ENCODE measurements at regions of chr19 and their contacts with region 1.

Region 1: GRCh38 chr19:16382775-16383543 is 58.3 kb downstream of the KLF2 start:
- DNase-seq: peak; percentile 88 to 97 (median 95)
- ATAC-seq: peak; percentile 88
- H3K4me3 ChIP-seq: no peak overlapping the region
- H3K27ac ChIP-seq: peak overlapping the region; percentile 97
- H3K4me1 ChIP-seq: peaks cover 13% of the 10 kb centered on the region
- H3K27me3 ChIP-seq: no peaks in the 10 kb centered on the region

Region 2: GRCh38 chr19:16247353-16248182 is 135.4 kb before region 1 on chr19:
- intact Hi-C with region 1: loop called (anchors 1 to 5 kb)
- DNase-seq: peak; percentile 87 to 95 (median 95)
- ATAC-seq: peak; percentile 92 to 95
- H3K4me3 ChIP-seq: no peak overlapping the region
- H3K27ac ChIP-seq: no peak overlapping the region
- H3K4me1 ChIP-seq: no peaks in the 10 kb centered on the region
- H3K27me3 ChIP-seq: no peaks in the 10 kb centered on the region

Region 3: DNA sequence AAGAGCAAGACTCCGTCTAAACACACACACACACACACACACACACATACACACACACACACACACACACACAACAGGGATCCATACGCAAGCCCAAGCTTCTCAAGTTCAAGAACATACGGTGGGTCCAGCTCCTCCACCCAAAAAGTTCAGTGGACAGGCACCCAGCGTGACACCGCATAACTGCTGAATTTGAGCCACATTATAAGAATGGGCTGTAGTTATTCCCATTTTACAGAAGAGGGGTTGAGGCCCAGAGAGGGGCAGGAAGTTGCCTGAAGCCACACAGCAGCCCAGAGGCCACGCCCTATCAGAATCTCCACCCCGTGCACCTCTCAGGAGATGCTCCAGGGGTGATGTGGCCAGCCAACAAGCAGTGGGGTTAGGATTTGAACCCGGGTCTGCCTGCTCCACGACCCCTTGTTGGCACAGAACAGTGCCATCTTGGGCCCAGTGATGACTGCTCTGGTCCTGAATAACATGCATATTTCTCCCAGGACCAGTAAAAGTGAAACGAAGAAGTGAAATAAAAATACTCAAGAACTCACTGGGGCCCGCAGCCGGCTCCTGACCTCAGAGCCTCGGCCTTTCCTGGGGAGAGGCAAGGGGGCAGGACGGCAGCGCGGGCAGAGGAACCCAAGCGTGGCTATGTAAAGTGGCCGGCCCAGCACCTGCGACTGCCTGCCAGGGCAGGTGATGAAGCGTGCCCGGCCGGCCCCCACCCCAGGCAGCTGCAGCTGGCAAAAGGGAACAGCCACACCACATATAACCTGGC is 123.4 kb before region 1 on chr19:
- intact Hi-C with region 1: loop called in 1 of 4 experiments (anchors 5 kb)
- DNase-seq: peak in 2 of 3 donors; percentile 70 to 74
- ATAC-seq: no peak
- H3K4me3 ChIP-seq: no peak overlapping the region
- H3K27ac ChIP-seq: peak overlapping the region; percentile 99
- H3K4me1 ChIP-seq: peaks cover 15% of the 10 kb centered on the region
- H3K27me3 ChIP-seq: no peaks in the 10 kb centered on the region

Region 4: GRCh38 chr19:16293118-16294091 is 89.6 kb before region 1 on chr19:
- intact Hi-C with region 1: no loop called
- DNase-seq: peak; percentile 86 to 92 (median 89)
- ATAC-seq: peak; percentile 92
- H3K4me3 ChIP-seq: peak overlapping the region; percentile 7
- H3K27ac ChIP-seq: peak overlapping the region; percentile 98
- H3K4me1 ChIP-seq: peaks cover 6% of the 10 kb centered on the region
- H3K27me3 ChIP-seq: no peaks in the 10 kb centered on the region

Region 5: DNA sequence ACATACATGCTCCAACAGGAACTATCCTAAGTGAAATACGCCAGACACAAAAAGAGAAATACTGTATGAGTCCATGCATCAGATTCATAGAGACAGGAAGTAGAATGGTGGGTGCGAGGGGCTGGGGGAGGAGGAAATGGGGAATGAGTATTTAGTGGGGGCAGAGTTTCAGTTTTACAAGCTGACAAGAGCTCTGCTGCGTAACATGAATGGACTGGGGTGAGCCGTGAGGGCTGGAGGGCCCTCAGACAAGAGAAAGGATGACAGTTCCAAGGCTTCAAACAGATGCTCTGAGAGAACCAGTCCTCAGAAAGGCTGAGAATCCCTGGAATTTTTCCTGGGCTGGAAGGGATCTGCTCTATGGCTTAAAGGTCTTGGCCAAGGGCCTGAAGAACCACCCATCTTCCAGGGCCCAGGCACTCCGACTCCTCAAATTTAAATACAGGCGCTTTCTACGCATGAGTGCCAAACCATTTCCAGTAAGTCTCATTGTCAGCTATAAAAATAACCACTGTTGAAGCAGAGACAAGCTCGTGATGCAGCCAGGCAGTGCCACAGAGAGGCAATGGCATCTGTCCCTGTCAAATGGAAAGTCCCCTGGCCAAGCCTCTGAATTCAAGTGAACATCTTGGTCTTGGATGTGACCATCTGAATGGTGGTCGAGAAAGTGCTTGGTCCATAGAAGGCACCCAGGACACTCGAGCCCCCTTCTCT is 40.8 kb before region 1 on chr19:
- intact Hi-C with region 1: loop called in 1 of 4 experiments (anchors 5 kb)
- DNase-seq: peak in 2 of 3 donors; percentile 43 to 66
- ATAC-seq: peak; percentile 73 to 74
- H3K4me3 ChIP-seq: no peak overlapping the region
- H3K27ac ChIP-seq: peak overlapping the region; percentile 100
- H3K4me1 ChIP-seq: peaks cover 12% of the 10 kb centered on the region
- H3K27me3 ChIP-seq: no peaks in the 10 kb centered on the region